Activated CD4-positive, alpha-beta memory T cell treated with anti-CD3 and anti-CD28 coated beads, Interleukin-2, amount 10 ng/mL, durations not matched to agents 7 days and 5 days (primary cell): ENCODE measurements at regions of chr14 and their contacts with region 1.

Region 1: GRCh38 chr14:52824507-52824906 is 33.1 kb upstream of the GNPNAT1 start:
- DNase-seq: no peak
- H3K4me3 Mint-ChIP-seq: no peak overlapping the region
- H3K27ac Mint-ChIP-seq: no peak overlapping the region
- H3K4me1 Mint-ChIP-seq: peaks cover 6% of the 10 kb centered on the region
- H3K27me3 Mint-ChIP-seq: peaks cover 11% of the 10 kb centered on the region

Region 2: DNA sequence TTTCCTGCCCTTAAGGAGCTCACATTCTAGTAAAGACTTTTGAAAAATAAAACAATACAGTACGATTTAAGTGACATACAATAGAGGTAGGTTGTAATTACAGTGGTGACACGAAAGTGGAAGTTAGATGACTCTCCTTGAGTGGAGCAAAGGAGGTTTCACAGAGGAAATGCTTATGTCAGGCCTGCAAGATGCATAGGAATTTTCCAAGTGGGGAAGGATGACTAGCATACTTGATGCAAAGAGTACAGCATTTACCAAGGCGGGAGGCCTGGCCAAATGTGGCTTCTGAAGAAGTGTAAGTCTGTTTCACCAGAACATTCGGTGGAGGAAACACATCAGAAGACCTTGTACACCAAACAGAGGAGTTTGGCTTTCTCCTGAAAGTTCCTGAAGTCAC is 184.4 kb before region 1 on chr14:
- CTCF ChIA-PET with region 1: no interaction called
- POLR2A ChIA-PET with region 1: no interaction called
- DNase-seq: no peak
- H3K4me3 Mint-ChIP-seq: no peak overlapping the region
- H3K27ac Mint-ChIP-seq: no peak overlapping the region
- H3K4me1 Mint-ChIP-seq: peaks cover 10% of the 10 kb centered on the region
- H3K27me3 Mint-ChIP-seq: peaks cover 4% of the 10 kb centered on the region

Region 3: DNA sequence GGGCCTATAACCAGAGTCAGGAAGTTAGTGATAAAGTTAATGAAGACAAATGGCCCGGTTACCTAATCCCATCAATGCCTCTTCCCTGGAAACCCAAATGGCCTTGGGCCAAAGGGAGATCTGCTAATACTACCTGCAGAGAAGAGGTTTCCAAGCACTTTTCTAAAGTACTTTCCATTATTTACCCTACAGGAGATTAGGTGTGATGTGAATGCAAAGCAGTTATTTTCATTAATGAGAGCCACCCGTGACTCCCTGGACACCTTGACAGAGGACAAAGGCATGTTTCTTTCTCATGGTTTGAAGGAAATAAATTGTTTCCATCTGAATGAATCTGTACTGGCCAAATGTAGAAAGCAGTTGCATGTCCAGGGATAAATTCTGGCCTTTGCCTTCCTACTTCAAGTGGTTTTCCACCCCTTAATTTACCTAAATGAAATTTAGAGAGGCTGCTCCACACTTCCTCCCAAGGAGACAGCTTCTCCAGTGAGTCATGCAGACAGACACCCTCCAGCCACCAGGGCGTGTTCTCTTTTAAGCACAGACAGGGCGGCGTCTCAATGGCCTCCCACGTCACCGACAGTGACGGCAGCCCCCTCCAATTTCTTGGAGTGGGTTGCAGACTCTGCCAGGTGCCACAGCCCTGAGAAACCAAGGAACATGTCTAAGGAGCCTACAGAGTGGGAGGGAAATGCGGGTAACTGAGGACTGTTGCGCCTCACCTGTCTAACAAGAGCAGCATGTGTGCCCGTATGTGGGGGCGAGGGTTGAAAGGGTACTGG is 10.8 kb after region 1 on chr14:
- CTCF ChIA-PET with region 1: no interaction called
- POLR2A ChIA-PET with region 1: no interaction called
- DNase-seq: no peak
- H3K4me3 Mint-ChIP-seq: no peak overlapping the region
- H3K27ac Mint-ChIP-seq: no peak overlapping the region
- H3K4me1 Mint-ChIP-seq: no peaks in the 10 kb centered on the region
- H3K27me3 Mint-ChIP-seq: no peaks in the 10 kb centered on the region

Region 4: DNA sequence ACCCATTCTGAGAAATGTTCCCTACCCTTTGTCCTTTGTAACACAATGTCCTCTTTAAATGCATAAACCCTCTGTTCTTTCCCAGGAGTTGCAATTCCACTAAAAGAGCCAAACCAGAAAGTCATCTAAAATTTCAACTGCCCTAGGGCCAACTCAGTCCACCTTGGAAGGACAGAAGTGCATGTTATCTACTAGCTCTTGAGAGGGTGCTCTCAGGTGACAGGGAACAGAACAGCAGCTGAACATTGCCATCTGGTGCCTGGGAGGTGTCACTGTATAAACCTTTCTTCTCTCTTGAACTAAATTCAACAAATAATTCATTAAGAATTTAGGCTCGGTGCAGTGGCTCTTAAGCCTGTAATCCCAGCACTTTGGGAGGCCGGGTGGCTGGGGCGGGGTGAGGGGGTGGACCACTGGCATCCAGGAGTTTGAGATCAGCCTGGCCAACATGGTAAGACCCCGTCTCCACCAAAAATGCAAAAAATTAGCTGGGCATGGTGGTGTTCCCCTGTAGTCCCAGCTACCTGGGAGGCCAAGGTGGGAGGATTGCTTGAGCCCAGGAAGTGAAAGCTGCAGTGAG is 136.6 kb after region 1 on chr14:
- CTCF ChIA-PET with region 1: interaction called, 37 read pairs
- POLR2A ChIA-PET with region 1: no interaction called
- DNase-seq: peak; percentile 60
- H3K4me3 Mint-ChIP-seq: no peak overlapping the region
- H3K27ac Mint-ChIP-seq: peak overlapping the region; percentile 67
- H3K4me1 Mint-ChIP-seq: peaks cover 14% of the 10 kb centered on the region
- H3K27me3 Mint-ChIP-seq: no peaks in the 10 kb centered on the region